PC-3 (cell line): ENCODE measurements at regions of chrX and their contacts with region 1.

Region 1: GRCh38 chrX:13223868-13224555 is 95.8 kb downstream of the ATXN3L start:
- DNase-seq: peak; percentile 94
- ATAC-seq: peak; percentile 96
- H3K4me3 ChIP-seq: no peak overlapping the region
- H3K27ac ChIP-seq: peak overlapping the region; percentile 87
- H3K4me1 ChIP-seq: peaks cover 39% of the 10 kb centered on the region
- H3K27me3 ChIP-seq: no peaks in the 10 kb centered on the region
- CTCF ChIP-seq: peak; percentile 30; the same call in 1 of the 2 replicates

Region 2: GRCh38 chrX:13101441-13102139 is 122.4 kb before region 1 on chrX:
- CTCF ChIA-PET with region 1: no interaction called
- POLR2A ChIA-PET with region 1: interaction called, 5 read pairs
- intact Hi-C with region 1: loop called (anchors 5 kb)
- DNase-seq: peak; percentile 91
- ATAC-seq: peak; percentile 98
- H3K4me3 ChIP-seq: 0 out of 2 replicates have a peak overlapping the region, but pooled peaks have one; percentile 4
- H3K27ac ChIP-seq: peak overlapping the region; percentile 94
- H3K4me1 ChIP-seq: peaks cover 44% of the 10 kb centered on the region
- H3K27me3 ChIP-seq: no peaks in the 10 kb centered on the region
- CTCF ChIP-seq: no peak

Region 3: DNA sequence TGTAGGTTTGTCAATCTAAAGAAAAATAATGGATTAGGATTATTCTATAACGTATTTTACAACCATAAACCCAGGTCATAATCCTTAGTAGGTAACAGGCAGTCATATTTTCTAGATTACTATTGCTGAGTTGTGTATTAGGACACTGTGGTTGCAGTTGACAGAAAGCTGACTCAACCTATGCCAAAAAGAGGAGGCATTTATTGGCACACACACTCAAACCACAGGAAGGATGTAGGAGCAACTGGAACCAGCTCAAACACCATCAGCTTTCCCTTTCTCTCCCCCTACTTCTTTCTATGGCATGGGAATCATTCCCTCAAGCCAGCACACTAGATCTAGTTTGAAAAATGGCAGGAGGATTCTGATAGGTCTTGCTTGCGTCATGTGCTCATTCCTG is 43.2 kb before region 1 on chrX:
- CTCF ChIA-PET with region 1: no interaction called
- POLR2A ChIA-PET with region 1: no interaction called
- intact Hi-C with region 1: loop called (anchors 5 kb)
- DNase-seq: peak; percentile 91
- ATAC-seq: peak; percentile 89
- H3K4me3 ChIP-seq: no peak overlapping the region
- H3K27ac ChIP-seq: peak overlapping the region; percentile 90
- H3K4me1 ChIP-seq: peaks cover 21% of the 10 kb centered on the region
- H3K27me3 ChIP-seq: no peaks in the 10 kb centered on the region
- CTCF ChIP-seq: no peak

Region 4: DNA sequence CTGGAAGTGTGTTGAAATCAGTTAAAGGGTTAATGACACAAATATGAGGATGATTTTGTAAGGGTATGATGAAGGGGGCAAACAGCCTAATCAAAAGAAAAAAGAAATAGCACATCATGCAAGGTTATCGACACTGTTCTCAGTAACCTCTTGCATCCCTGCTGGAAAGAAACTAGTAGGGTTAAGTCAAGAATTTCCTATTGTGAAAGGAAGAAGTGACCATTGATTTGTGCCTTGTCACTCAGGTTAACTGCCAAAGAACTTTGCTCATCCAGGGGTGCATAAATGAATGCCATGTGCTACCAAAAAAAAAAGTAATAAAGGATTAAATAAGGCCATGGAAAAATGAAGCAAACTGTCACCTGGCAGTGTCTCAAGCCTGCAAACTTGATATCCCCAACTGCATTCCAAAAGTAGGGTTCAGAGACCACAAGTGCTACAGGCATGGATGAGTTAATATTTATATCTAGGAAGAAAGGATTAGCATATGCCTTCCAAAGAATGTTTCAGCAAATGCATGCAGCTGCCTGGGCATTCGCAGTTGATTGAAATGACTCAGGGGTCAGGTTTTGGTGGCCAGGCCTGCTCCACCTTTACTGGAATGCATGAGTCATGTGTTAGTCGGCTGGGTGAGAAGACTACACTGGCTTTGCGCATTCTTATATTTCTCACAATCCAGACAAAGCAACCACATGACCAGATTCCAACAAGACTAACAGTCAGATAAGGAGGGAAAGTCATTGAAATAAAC is 174.2 kb after region 1 on chrX:
- CTCF ChIA-PET with region 1: no interaction called
- POLR2A ChIA-PET with region 1: no interaction called
- intact Hi-C with region 1: loop called (anchors 5 kb)
- DNase-seq: peak; percentile 97
- ATAC-seq: peak; percentile 93
- H3K4me3 ChIP-seq: no peak overlapping the region
- H3K27ac ChIP-seq: peak overlapping the region; percentile 95
- H3K4me1 ChIP-seq: peaks cover 30% of the 10 kb centered on the region
- H3K27me3 ChIP-seq: no peaks in the 10 kb centered on the region
- CTCF ChIP-seq: no peak